ENCODE measurements at regions of chr19 and their contacts with region 1.

Region 1: DNA sequence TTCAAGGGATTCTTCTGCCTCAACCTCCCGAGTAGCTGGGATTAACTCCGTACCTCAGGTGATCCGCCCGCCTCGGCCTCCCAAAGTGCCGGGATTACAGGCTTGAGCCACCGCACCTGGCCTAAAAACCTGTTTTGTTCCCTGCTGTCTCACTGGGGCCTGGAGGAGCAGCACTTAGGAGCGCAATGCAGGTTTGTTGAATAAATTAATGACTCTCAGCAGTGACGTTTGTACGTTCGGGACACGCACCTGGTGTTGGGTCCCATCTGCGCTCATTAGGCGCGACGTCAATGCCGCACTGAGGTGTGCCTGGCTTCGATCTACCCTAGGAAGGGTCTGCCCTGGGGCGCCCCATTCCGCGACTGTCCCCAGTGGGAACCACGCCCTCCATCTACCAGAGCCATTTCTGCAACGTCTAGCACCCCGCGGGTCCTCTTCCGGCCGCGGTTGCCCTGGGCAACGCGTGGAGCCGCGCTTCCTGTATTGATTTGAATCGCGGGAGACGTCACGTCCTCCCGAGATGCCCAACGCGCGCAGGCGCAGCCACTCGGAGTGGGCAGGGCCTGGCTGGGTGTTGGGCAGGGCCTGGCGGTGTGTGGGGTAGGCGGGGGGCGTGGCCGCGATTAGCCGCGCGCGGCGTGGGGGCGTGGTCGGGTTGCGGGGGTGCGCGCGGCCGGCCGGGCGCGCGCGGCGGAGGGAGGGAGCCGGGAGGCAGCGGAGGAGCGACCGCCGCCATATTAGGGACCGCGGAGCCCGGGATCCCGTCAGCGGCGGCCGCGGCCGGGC is at the start of gene FZR1:
- DNase-seq: peak; percentile 100
- ATAC-seq: peak; percentile 92
- H3K4me3 Mint-ChIP-seq: peak within 1 kb of the TSS; percentile 84
- H3K27ac Mint-ChIP-seq: peak within 1 kb of the TSS; percentile 86
- H3K4me1 Mint-ChIP-seq: peaks cover 45% of the 10 kb centered on the region
- H3K27me3 Mint-ChIP-seq: no peaks in the 10 kb centered on the region
- total RNA-seq, gene FZR1: 40.8 to 50.7 TPM

Region 2: DNA sequence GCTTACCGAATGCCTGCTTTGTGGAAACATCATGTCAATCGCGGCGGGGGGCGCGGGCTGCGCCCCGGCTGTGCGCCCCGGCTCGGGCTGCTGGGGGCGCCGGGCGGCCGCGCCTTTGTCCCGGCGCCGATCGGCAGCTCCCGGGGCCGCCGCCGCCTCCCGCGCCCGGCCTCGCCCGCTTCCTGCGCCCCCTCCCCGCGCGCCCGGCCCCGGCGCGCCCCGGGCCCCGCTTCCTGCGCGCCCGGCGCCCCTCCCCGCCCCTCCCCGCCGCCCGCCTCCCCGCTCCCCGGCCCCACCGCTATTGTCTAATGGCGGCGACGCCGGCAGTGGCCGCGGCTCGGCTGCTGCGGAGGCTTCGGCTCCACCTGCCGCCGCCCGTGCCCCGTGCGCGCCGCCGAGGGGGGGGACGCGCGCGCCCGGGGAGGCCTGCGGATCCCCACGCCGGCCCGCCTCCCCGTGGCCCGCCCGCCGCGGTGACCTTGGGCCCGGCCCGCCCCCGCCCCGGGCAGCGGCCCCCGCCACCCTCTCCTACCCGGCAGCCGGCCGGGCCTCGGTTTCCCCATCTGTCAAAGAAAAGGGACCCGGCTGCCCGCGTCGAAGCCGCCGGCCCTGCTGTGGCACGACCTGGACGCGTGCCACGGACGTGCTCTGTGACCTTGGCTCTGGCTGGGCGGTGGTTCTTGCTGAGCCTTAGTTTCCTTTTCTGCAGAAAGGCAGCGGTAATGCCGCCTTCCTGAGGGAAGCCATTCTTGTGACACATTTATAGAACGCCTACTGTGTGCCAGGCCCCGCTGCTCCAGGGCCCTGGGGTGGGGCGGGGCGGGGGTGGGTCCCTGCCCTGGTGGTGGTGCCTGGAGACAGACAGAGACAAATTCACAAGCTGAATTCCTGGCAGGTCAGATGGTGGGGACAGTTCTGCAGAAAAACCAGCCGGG is 443.4 kb before region 1 on chr19 and contains the start of gene TLE5:
- CTCF ChIA-PET with region 1: no interaction called
- POLR2A ChIA-PET with region 1: interaction called, 4 read pairs
- intact Hi-C with region 1: loop called in 1 of 2 experiments (anchors 10 kb)
- DNase-seq: peak; percentile 83
- ATAC-seq: peak; percentile 71
- H3K4me3 Mint-ChIP-seq: peak within 1 kb of the TSS; percentile 82
- H3K27ac Mint-ChIP-seq: peak within 1 kb of the TSS; percentile 97
- H3K4me1 Mint-ChIP-seq: peaks cover 35% of the 10 kb centered on the region
- H3K27me3 Mint-ChIP-seq: no peaks in the 10 kb centered on the region
- total RNA-seq, gene TLE5: 349 to 533 TPM

Region 3: DNA sequence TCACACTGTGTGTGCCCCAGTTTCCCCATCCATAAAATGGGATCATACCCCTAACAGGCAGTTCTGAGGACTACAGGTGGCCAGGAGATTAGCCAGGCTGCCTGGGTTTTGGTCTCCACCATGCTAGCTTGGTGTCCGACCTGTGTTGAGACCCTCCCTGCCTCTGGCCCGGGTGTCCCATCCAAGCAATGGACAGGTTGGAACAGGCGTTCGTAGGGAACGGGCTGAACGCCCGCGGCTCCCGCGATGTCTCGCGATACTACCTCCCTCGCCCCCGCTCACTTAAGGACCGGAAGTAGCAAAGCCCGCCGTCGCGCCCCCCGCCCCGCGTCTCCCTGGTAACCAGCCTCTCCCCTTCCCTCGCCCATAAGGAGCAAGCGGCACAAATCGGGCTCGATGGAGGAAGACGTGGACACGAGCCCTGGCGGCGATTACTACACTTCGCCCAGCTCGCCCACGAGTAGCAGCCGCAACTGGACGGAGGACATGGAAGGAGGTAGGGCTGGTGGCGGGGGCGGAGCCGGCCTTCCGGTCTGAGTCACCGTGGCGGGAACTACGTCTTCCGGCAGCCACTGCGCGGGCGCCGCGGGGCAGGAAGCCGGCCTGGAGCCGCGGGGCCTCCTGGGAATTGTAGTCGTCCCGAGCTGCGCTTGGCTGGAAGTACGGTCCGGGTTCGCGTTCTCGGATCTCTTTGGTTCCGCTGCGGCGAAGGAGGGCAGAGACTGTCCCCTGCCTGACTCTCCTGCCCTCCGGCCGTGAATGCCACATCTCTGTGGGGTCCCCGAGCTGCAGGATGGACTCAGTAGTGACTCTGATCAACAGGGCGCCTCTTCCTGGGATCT is 70.9 kb before region 1 on chr19:
- CTCF ChIA-PET with region 1: interaction called, 3 read pairs
- POLR2A ChIA-PET with region 1: no interaction called
- intact Hi-C with region 1: loop called in 1 of 2 experiments (anchors 1 kb)
- DNase-seq: peak; percentile 98
- ATAC-seq: peak; percentile 96
- H3K4me3 Mint-ChIP-seq: peak overlapping the region; percentile 84
- H3K27ac Mint-ChIP-seq: peak overlapping the region; percentile 99
- H3K4me1 Mint-ChIP-seq: peaks cover 13% of the 10 kb centered on the region
- H3K27me3 Mint-ChIP-seq: no peaks in the 10 kb centered on the region

Region 4: DNA sequence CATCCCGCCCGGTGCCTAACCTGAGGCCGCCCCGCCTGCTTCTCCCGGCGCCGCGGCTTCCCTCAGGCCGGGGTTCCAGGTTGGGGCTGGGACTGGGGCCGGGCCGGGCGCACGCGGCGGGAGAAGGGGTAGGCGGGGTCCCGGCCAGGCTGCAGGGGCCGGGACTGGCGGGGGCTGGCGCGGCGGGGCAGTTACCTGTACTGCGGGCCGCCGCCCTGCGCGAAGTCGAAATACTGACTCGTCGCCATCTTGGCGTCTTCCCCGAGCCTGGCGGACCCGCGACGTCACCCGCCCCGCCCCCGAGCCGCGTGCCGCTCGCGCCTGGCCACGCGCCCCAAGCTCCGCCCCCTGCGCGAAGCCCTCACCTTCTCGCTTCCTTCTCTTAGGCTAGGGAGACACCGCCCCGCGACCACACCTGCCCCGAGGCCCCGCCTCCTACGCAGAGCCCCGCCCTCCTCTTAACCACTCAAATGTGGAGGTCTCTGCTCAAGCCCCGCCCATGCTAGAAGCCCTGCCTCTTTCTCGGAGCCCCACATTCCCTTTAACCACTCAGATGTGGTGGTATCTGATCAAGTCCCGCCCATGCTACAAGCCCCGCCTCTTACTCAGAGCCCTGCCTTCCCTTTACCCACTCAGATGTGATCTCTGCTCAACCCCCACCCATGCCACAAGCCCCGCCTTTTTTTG is 363.1 kb after region 1 on chr19 and contains the start of gene ZFR2:
- CTCF ChIA-PET with region 1: no interaction called
- POLR2A ChIA-PET with region 1: no interaction called
- intact Hi-C with region 1: no loop called
- DNase-seq: peak; percentile 54
- ATAC-seq: peak; percentile 39
- H3K4me3 Mint-ChIP-seq: no peak within 1 kb of the TSS
- H3K27ac Mint-ChIP-seq: no peak within 1 kb of the TSS
- H3K4me1 Mint-ChIP-seq: peaks cover 10% of the 10 kb centered on the region
- H3K27me3 Mint-ChIP-seq: peaks cover 35% of the 10 kb centered on the region
- total RNA-seq, gene ZFR2: 0.23 to 0.51 TPM

Region 5: GRCh38 chr19:4007021-4007835 is 501.4 kb after region 1 on chr19 and contains the start of gene PIAS4:
- CTCF ChIA-PET with region 1: no interaction called
- POLR2A ChIA-PET with region 1: no interaction called
- intact Hi-C with region 1: loop called in 1 of 2 experiments (anchors 1 kb)
- DNase-seq: peak; percentile 97
- ATAC-seq: peak; percentile 92
- H3K4me3 Mint-ChIP-seq: peak within 1 kb of the TSS; percentile 75
- H3K27ac Mint-ChIP-seq: peak within 1 kb of the TSS; percentile 71
- H3K4me1 Mint-ChIP-seq: peaks cover 27% of the 10 kb centered on the region
- H3K27me3 Mint-ChIP-seq: no peaks in the 10 kb centered on the region
- total RNA-seq, gene PIAS4: 23.0 to 37.3 TPM

Region 6: GRCh38 chr19:4457654-4458395 is 952.0 kb after region 1 on chr19 and contains the start of gene UBXN6:
- CTCF ChIA-PET with region 1: no interaction called
- POLR2A ChIA-PET with region 1: no interaction called
- intact Hi-C with region 1: loop called in 1 of 2 experiments (anchors 2 kb)
- DNase-seq: peak; percentile 99
- ATAC-seq: peak; percentile 93
- H3K4me3 Mint-ChIP-seq: peak within 1 kb of the TSS; percentile 86
- H3K27ac Mint-ChIP-seq: peak within 1 kb of the TSS; percentile 86
- H3K4me1 Mint-ChIP-seq: peaks cover 19% of the 10 kb centered on the region
- H3K27me3 Mint-ChIP-seq: no peaks in the 10 kb centered on the region
- total RNA-seq, gene UBXN6: 32.9 to 38.4 TPM